Colonic mucosa (tissue), 4 donors: ENCODE measurements at regions of chr1 and their contacts with region 1.

Region 1: DNA sequence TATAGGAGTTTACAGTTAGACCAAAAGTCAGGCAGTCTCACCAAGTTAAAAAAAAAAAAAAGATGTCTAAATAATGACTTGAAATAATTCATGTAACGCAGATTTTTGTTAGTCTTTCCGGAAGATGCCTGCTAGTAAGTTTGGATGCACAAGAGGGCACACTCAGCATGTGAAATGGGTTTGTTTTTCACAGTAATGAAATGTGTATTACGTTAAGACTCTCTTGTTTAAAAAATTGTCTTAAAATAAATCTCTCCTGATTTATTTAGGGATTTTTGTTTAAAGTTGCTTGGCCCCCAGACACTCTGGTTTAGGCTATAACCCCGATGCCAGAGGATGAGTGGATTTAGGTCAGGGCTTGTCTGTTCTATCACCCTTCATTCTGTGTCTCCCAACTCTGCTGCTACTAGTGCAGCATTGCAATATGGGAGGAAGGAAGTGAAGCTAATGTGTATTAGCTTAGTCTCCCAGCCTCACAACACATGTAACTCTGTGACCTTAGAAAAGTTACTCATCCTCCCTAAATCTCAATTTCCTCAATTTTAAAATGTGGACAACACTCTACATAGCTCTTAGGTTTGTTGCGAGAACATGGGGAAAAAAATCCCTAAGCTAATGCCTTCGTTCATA is 25.7 kb downstream of the CTH start:
- DNase-seq: no peak
- H3K4me3 ChIP-seq: no peak overlapping the region
- H3K27ac ChIP-seq: no peak overlapping the region
- H3K4me1 ChIP-seq: peaks cover 3% of the 10 kb centered on the region
- H3K27me3 ChIP-seq: no peaks in the 10 kb centered on the region
- CTCF ChIP-seq: peak; percentile 28

Region 2: DNA sequence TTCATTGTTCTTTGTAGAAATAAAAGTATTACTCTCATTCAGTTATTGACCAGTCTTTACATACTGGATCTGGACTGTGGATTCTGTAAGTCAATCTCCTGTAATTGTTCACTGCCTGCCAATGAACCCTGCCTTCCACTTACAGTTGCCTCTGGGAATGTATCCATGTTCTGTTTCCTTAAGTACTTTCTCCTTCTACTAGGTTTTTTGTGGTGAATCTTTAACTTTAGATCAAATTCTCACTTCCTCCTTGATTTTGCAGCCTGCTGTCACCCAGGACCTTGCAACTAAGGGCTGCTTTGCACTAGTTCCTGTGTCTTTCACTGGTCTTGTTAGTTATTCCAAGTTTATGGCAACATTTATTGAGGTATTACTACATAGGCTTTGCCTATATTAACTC is 54.1 kb before region 1 on chr1:
- intact Hi-C with region 1: no loop called
- DNase-seq: no peak
- H3K4me3 ChIP-seq: no peak overlapping the region
- H3K27ac ChIP-seq: no peak overlapping the region
- H3K4me1 ChIP-seq: no peaks in the 10 kb centered on the region
- H3K27me3 ChIP-seq: no peaks in the 10 kb centered on the region
- CTCF ChIP-seq: no peak

Region 3: DNA sequence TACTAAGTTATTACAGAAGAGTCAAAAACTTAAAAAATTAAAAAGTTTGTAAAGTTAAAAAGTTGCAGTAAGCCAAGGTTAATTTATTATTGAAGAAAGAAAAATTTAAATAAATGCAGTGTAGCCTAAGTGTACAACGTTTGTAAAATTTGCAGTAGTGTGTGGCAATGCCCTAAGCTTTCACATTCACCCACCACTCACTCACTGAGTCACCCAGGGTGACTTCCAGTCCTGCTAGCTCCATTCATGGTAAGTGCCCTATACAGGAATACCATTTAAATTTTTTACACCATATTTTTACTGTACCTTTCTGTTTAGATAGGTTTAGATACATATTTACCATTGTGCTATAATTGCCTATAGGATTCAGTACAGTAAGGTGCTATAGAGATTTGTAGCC is 63.0 kb after region 1 on chr1:
- intact Hi-C with region 1: loop called (anchors 10 kb)
- DNase-seq: no peak
- H3K4me3 ChIP-seq: no peak overlapping the region
- H3K27ac ChIP-seq: no peak overlapping the region
- H3K4me1 ChIP-seq: no peaks in the 10 kb centered on the region
- H3K27me3 ChIP-seq: no peaks in the 10 kb centered on the region
- CTCF ChIP-seq: no peak

Region 4: GRCh38 chr1:70509996-70510876 is 73.5 kb after region 1 on chr1:
- intact Hi-C with region 1: loop called (anchors 5 kb)
- DNase-seq: no peak
- H3K4me3 ChIP-seq: no peak overlapping the region
- H3K27ac ChIP-seq: no peak overlapping the region
- H3K4me1 ChIP-seq: no peaks in the 10 kb centered on the region
- H3K27me3 ChIP-seq: no peaks in the 10 kb centered on the region
- CTCF ChIP-seq: peak; percentile 65